Activated T-helper 1 cell treated with anti-CD3 and anti-CD28 coated beads, Interleukin-12 subunit alpha, Interleukin-12 subunit beta, Interleukin-2, Interleukin-4 antibody, amounts not matched to agents 30 ng/mL and 10 ng/mL and 1 ng/mL, durations not matched to agents 14 hours and 24 hours and 36 hours (primary cell): ENCODE measurements at regions of chr2 and their contacts with region 1.

Region 1: DNA sequence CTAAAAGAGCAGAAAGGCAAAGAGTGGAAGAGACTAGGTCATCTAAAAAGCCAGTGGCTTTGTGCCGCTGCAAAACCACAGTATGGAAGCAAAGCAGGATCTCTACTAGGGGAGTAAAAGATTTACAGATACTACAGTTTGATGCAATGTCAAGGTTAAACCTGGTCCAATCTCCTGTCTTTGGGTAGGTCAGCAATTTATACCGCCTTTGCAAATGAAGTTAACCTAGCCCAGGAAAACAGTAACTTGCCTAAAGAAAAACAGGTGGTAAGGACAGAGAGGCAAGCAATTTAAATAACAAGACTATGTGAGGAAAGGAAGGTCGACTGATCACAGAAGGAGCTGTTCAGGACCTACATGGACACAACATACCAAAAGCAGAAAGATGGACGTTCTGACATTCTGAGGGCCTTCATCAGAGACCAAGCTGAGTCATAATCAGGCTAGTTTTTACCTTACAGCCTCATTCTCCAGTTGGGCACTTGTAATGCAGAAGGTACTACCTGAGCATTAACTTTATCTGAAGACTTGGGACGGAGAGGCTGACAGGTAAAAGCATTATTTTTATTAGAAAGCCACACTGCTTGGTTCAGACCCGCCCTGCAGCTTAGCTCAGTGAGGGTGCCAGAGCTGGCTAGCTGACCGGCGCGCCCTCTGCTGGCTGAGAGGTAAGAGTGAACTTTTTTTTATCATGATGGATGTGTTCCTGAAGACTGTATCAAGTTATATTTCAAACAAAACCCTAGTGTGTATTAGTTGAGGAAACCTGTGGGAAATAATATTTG is 15.9 kb downstream of the CDKL4 start:
- DNase-seq: peak; percentile 70
- H3K4me3 Mint-ChIP-seq: peak overlapping the region; percentile 76
- H3K27ac Mint-ChIP-seq: peak overlapping the region; percentile 83
- H3K4me1 Mint-ChIP-seq: peaks cover 54% of the 10 kb centered on the region
- H3K27me3 Mint-ChIP-seq: no peaks in the 10 kb centered on the region

Region 2: GRCh38 chr2:38778687-38779082 is 449.1 kb before region 1 on chr2:
- intact Hi-C with region 1: loop called (anchors 5 kb)
- DNase-seq: no peak
- H3K4me3 Mint-ChIP-seq: peak overlapping the region; percentile 100
- H3K27ac Mint-ChIP-seq: peak overlapping the region; percentile 100
- H3K4me1 Mint-ChIP-seq: peaks cover 16% of the 10 kb centered on the region
- H3K27me3 Mint-ChIP-seq: peaks cover 13% of the 10 kb centered on the region

Region 3: DNA sequence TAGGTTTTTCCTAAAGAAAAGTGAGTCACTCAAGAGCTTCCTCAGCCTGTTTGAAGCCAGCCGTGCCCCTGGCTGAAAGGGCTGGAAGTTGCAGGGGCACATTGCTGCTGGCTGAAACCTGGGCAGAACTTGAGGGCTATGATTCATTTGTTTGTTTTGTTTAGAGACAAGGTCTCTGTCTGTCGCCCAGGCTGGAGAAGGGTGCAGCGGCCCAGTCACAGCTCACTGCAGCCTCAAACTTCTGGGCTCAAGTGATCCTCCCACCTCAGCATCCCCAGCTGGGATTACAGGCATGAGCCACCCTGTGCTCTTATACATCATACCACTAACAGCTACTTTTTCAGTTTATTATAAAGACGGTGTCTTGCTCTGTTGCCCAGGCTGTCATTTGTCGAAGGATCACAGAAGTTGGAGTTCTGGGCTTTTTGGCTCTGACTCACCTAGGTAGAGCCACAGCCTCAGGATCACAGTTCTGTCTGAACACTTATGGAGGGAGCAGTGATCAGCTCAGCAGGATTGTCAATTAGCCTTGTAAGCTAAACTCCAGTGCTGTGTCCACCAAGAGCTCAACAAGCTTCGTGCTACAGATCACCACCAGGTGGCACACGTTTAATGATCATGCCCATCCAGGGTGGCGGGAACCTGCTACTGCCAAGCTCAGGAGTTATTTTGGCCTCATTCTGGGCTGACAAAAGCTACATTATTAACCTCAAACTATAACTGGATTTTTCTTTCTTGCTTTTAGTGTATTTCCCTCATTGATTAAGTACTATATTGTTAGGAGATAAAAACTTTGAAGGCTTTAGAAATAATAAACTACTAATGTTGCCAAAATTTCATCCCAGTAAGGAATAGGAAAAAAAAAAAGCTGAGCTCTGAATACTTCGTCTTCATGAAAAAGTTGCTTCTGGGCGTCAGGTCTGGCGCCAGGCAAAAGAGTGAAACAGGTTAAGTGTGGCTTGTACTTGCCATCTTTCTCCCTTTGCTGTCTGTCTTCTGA is 280.3 kb before region 1 on chr2:
- intact Hi-C with region 1: loop called (anchors 1 kb)
- DNase-seq: peak; percentile 38
- H3K4me3 Mint-ChIP-seq: no peak overlapping the region
- H3K27ac Mint-ChIP-seq: no peak overlapping the region
- H3K4me1 Mint-ChIP-seq: no peaks in the 10 kb centered on the region
- H3K27me3 Mint-ChIP-seq: peaks cover 6% of the 10 kb centered on the region

Region 4: GRCh38 chr2:38959938-38960608 is 267.7 kb before region 1 on chr2:
- intact Hi-C with region 1: loop called (anchors 5 kb)
- DNase-seq: peak; percentile 59
- H3K4me3 Mint-ChIP-seq: peak overlapping the region; percentile 45
- H3K27ac Mint-ChIP-seq: no peak overlapping the region
- H3K4me1 Mint-ChIP-seq: peaks cover 4% of the 10 kb centered on the region
- H3K27me3 Mint-ChIP-seq: peaks cover 53% of the 10 kb centered on the region

Region 5: DNA sequence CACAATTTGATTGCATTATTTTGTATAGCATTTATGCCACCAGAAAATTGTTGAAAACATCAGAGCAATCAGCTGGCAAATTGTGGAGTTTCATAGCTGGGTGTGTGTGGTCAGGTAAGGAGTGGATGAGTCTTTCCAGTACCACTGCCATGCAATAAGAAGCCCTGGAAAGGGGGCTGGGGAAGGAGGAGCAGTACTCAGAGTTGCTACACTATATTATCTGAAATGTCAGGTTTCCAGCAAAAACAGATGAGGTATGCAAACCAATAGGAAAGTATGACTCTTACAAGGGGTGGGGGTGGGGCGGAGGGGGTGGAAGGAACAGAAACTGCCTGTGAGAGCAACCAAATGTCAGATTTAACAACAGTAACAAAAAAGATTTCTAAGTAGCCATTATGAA is 219.2 kb before region 1 on chr2:
- intact Hi-C with region 1: loop called (anchors 2 kb)
- DNase-seq: no peak
- H3K4me3 Mint-ChIP-seq: peak overlapping the region; percentile 45
- H3K27ac Mint-ChIP-seq: peak overlapping the region; percentile 94
- H3K4me1 Mint-ChIP-seq: peaks cover 19% of the 10 kb centered on the region
- H3K27me3 Mint-ChIP-seq: no peaks in the 10 kb centered on the region

Region 6: GRCh38 chr2:39059366-39059952 is 168.4 kb before region 1 on chr2:
- intact Hi-C with region 1: loop called (anchors 1 kb)
- DNase-seq: no peak
- H3K4me3 Mint-ChIP-seq: no peak overlapping the region
- H3K27ac Mint-ChIP-seq: no peak overlapping the region
- H3K4me1 Mint-ChIP-seq: peaks cover 24% of the 10 kb centered on the region
- H3K27me3 Mint-ChIP-seq: no peaks in the 10 kb centered on the region

Region 7: GRCh38 chr2:39099870-39100728 is 127.7 kb before region 1 on chr2:
- intact Hi-C with region 1: loop called (anchors 1 kb)
- DNase-seq: no peak
- H3K4me3 Mint-ChIP-seq: peak overlapping the region; percentile 53
- H3K27ac Mint-ChIP-seq: peak overlapping the region; percentile 89
- H3K4me1 Mint-ChIP-seq: peaks cover 70% of the 10 kb centered on the region
- H3K27me3 Mint-ChIP-seq: no peaks in the 10 kb centered on the region